ENCODE measurements at regions of chr12 and their contacts with region 1.

Region 1: DNA sequence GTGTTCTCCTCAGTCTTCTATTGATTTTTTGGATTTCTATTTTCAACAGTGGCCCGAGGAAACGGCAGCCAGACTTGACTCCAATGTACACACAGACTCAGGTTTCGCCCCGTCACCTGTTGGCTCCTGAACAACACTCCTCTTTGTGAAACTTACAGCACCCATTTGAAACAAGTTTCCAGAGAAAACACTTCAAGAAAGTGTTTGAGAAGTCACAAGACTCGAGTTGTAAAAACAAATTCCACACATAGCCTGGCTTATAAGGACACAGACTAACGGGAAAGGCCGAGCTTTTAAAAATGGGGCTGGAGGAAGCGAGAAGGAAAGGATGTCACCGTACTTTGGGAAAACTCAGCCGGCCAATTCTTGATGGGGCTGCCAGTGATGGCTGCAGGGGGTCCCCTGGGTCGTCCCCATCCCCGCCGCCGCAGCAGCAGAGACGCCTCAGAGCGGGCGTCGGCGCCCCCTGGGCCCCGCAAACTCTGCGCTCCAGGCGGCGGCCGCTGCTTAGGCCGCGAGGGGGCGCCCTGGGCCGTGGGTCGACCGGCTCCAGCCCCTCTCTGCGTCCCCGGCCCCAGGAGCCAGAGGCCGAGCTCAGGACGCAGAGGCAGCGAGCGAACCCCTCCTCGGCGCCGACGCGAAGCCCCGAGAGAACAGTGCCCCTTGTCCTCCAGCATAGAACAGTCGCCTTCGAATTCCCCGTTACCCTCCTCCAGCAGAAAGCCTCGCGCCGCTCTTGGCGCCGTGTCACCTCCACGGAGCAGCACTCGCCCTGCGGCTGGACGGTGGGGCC is 106.9 kb downstream of the PRICKLE1 start:
- DNase-seq: peak; percentile 72 to 90
- H3K4me3 ChIP-seq: peak overlapping the region; percentile 54
- H3K4me3 Mint-ChIP-seq: peak overlapping the region; percentile 92
- H3K27ac Mint-ChIP-seq: no peak overlapping the region
- H3K4me1 ChIP-seq: peaks cover 6% of the 10 kb centered on the region; the same call in 1 of the 2 replicates
- H3K4me1 Mint-ChIP-seq: no peaks in the 10 kb centered on the region
- H3K27me3 ChIP-seq: no peaks in the 10 kb centered on the region
- H3K27me3 Mint-ChIP-seq: no peaks in the 10 kb centered on the region
- CTCF ChIP-seq: peak; percentile 82 to 89

Region 2: GRCh38 chr12:42421844-42422779 is 60.5 kb before region 1 on chr12:
- CTCF ChIA-PET with region 1: no interaction called
- POLR2A ChIA-PET with region 1: no interaction called
- intact Hi-C with region 1: no loop called
- DNase-seq: no peak
- H3K4me3 ChIP-seq: no peak overlapping the region
- H3K4me3 Mint-ChIP-seq: no peak overlapping the region
- H3K27ac Mint-ChIP-seq: no peak overlapping the region
- H3K4me1 ChIP-seq: no peaks in the 10 kb centered on the region
- H3K4me1 Mint-ChIP-seq: peaks cover 10% of the 10 kb centered on the region
- H3K27me3 ChIP-seq: no peaks in the 10 kb centered on the region
- H3K27me3 Mint-ChIP-seq: no peaks in the 10 kb centered on the region
- CTCF ChIP-seq: no peak

Region 3: GRCh38 chr12:42652048-42652447 is 169.4 kb after region 1 on chr12:
- CTCF ChIA-PET with region 1: no interaction called
- POLR2A ChIA-PET with region 1: no interaction called
- intact Hi-C with region 1: loop called (anchors 1 kb)
- DNase-seq: peak in 1 of 2 experiments; percentile 18
- H3K4me3 ChIP-seq: no peak overlapping the region
- H3K4me3 Mint-ChIP-seq: no peak overlapping the region
- H3K27ac Mint-ChIP-seq: no peak overlapping the region
- H3K4me1 ChIP-seq: no peaks in the 10 kb centered on the region
- H3K4me1 Mint-ChIP-seq: no peaks in the 10 kb centered on the region
- H3K27me3 ChIP-seq: no peaks in the 10 kb centered on the region
- H3K27me3 Mint-ChIP-seq: peaks cover 2% of the 10 kb centered on the region
- CTCF ChIP-seq: no peak

Region 4: GRCh38 chr12:43282106-43282505 is 799.5 kb after region 1 on chr12:
- CTCF ChIA-PET with region 1: interaction called, 12 read pairs
- POLR2A ChIA-PET with region 1: no interaction called
- intact Hi-C with region 1: loop called (anchors 1 kb)
- DNase-seq: no peak
- H3K4me3 ChIP-seq: no peak overlapping the region
- H3K4me3 Mint-ChIP-seq: no peak overlapping the region
- H3K27ac Mint-ChIP-seq: no peak overlapping the region
- H3K4me1 ChIP-seq: no peaks in the 10 kb centered on the region
- H3K4me1 Mint-ChIP-seq: peaks cover 10% of the 10 kb centered on the region
- H3K27me3 ChIP-seq: no peaks in the 10 kb centered on the region
- H3K27me3 Mint-ChIP-seq: no peaks in the 10 kb centered on the region
- CTCF ChIP-seq: no peak

Region 5: GRCh38 chr12:43338848-43339526 is 856.3 kb after region 1 on chr12:
- CTCF ChIA-PET with region 1: interaction called, 10 read pairs
- POLR2A ChIA-PET with region 1: no interaction called
- intact Hi-C with region 1: loop called (anchors 1 kb)
- DNase-seq: peak in 1 of 2 experiments; percentile 20
- H3K4me3 ChIP-seq: no peak overlapping the region
- H3K4me3 Mint-ChIP-seq: no peak overlapping the region
- H3K27ac Mint-ChIP-seq: no peak overlapping the region
- H3K4me1 ChIP-seq: no peaks in the 10 kb centered on the region
- H3K4me1 Mint-ChIP-seq: no peaks in the 10 kb centered on the region
- H3K27me3 ChIP-seq: no peaks in the 10 kb centered on the region
- H3K27me3 Mint-ChIP-seq: no peaks in the 10 kb centered on the region
- CTCF ChIP-seq: peak in 1 of 2 experiments; percentile 69